ENCODE measurements at regions of chr12 and their contacts with region 1.

Region 1: DNA sequence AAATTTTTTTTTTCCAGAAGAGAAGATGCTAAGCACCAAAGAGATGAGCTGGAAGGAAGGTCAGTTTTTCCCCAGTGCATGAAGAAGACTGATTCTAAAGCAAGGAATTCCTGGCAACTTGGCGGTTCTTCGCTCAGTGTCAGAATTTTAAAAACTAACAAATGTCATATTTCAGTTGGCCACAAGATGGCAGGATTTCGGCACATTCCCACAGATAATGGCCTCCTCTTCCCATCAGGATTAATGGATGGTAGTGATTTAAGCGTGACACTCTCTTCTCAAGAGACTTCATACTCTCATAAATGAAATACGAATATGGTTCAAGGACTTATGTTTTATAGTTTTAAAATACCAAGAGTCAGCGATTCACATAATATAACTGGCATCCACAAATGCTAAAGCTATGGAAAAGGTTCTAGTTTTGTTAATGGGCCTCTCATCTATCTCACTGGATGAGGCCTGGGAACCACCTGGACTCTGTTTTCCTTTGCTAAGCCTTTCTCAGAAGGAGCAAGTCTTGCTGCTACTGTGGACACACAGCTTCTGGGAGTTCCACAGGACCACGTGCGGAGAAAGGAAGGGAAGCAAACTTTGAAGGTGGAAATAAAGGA is 46.1 kb upstream of the PTPRO start:
- DNase-seq: peak in 2 of 10 donors; percentile 18 to 21
- H3K4me3 ChIP-seq: no peak overlapping the region
- H3K27ac ChIP-seq: no peak overlapping the region
- H3K27me3 ChIP-seq: no peaks in the 10 kb centered on the region
- CTCF ChIP-seq: peak; percentile 72 to 97 (median 87)

Region 2: GRCh38 chr12:15131431-15131830 is 144.8 kb before region 1 on chr12:
- intact Hi-C with region 1: no loop called
- DNase-seq: no peak
- H3K4me3 ChIP-seq: no peak overlapping the region
- H3K27ac ChIP-seq: no peak overlapping the region
- H3K27me3 ChIP-seq: no peaks in the 10 kb centered on the region
- CTCF ChIP-seq: no peak

Region 3: GRCh38 chr12:15155271-15155670 is 120.9 kb before region 1 on chr12:
- intact Hi-C with region 1: no loop called
- DNase-seq: peak in 1 of 10 donors; percentile 36
- H3K4me3 ChIP-seq: no peak overlapping the region
- H3K27ac ChIP-seq: peak overlapping the region in 6 of 59 donors; percentile 13 to 49 (median 37)
- H3K27me3 ChIP-seq: peaks cover 0 to 6% (median 0%) of the 10 kb centered on the region in 45 donors
- CTCF ChIP-seq: no peak

Region 4: DNA sequence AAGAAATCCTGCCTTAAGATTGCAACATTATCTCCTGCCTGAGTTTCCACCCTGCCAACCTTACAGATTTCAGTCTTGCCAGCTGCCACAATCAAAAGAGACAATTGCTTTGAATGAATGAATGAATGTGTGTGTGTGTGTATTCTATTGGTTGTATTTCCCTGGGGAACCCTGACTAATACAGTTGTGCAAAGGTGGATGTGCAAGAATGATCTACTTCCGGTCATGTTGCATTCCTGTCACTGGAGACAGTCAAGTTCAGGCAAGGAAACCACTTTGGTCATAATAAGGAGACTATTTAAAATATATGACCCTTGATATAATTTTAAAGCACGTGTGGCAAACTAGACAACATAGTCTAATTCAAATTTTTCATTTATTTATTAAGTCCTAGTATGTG is 68.1 kb before region 1 on chr12:
- intact Hi-C with region 1: no loop called
- DNase-seq: no peak
- H3K4me3 ChIP-seq: no peak overlapping the region
- H3K27ac ChIP-seq: no peak overlapping the region
- H3K27me3 ChIP-seq: no peaks in the 10 kb centered on the region
- CTCF ChIP-seq: no peak

Region 5: GRCh38 chr12:15522565-15523187 is 246.5 kb after region 1 on chr12:
- intact Hi-C with region 1: loop called (anchors 5 kb)
- DNase-seq: no peak
- H3K4me3 ChIP-seq: no peak overlapping the region
- H3K27ac ChIP-seq: no peak overlapping the region
- H3K27me3 ChIP-seq: no peaks in the 10 kb centered on the region
- CTCF ChIP-seq: peak; percentile 28 to 80 (median 64)

Region 6: GRCh38 chr12:15584366-15585041 is 308.3 kb after region 1 on chr12:
- intact Hi-C with region 1: loop called (anchors 2 to 5 kb)
- DNase-seq: peak in 1 of 10 donors; percentile 40
- H3K4me3 ChIP-seq: peak overlapping the region in 2 of 59 donors; percentile 22 to 30
- H3K27ac ChIP-seq: peak overlapping the region in 2 of 59 donors; percentile 2 to 16
- H3K27me3 ChIP-seq: no peaks in the 10 kb centered on the region
- CTCF ChIP-seq: peak; percentile 55 to 94 (median 77)